ENCODE measurements at regions of chr4 and their contacts with region 1.

Region 1: DNA sequence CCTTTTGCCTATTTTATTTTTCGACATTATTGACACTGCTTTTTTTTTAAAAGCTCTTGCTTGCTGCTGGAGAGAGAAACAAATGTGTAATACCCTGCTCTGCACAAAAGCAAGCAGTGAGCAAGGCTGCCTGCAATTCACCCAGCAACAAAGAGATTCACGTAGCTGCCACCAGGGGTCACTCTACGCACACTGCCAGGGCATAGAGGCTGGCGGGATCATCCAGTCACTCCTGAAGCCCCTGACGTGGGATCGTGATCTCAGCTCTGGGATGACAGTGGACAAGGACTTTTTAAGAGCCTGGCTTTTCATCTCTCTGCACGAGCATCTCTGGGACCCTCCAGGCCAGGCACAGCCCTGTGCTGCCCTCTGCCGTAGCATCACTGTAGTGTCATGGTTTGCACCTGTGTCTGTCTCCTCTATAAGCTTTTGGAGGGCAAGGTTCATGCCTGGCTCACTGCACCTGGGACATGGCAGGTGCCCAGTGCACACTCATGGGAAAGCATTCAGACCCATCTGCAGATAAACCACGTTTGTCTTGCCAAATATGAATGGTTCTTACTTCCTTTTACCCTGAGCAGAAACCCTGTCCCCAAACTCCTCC is 19.8 kb downstream of the C4orf50 start:
- DNase-seq: peak; percentile 63
- H3K4me3 Mint-ChIP-seq: no peak overlapping the region
- H3K27ac Mint-ChIP-seq: no peak overlapping the region
- H3K4me1 Mint-ChIP-seq: peaks cover 4% of the 10 kb centered on the region
- H3K27me3 Mint-ChIP-seq: peaks cover 3% of the 10 kb centered on the region

Region 2: DNA sequence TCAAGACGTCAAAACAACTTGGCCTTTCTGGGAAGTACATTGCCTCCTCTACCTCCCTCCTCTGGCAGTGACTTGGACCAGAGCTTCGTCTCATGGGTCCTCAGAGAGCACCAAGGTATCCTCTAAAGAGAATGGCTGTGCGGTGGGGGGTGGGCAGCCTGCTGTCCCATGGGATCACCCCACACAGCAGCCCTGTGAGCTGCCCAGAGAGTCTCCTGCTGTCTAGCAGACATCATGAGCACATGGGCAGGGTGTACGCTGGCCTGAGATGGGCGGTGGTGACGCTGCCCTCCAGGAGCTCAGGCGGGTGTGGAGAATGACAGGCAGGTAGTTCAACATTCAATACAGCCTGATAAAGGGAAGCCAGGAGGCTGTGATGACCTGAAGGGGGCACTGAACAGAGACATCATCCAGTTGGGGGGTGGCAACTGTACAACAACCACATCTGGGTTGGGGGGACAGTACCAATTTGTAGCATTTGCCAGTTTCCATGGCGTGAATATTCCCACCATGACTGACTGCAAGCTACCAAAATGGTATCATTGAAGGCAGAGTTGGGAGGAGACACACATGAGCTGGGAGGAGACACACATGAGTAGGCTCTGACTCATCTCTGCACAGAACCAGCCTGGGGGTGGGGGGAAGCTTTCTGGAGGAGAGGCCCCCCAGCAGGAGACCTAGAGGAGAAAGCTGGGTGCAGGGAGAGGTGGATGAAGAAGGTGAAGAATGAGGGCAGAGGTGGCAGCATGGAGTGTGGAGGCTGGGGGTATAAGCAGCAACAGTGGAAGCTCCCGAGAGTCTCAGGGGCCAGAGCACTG is 16.1 kb before region 1 on chr4:
- CTCF ChIA-PET with region 1: interaction called, 13 read pairs
- POLR2A ChIA-PET with region 1: no interaction called
- intact Hi-C with region 1: no loop called
- DNase-seq: no peak
- H3K4me3 Mint-ChIP-seq: no peak overlapping the region
- H3K27ac Mint-ChIP-seq: no peak overlapping the region
- H3K4me1 Mint-ChIP-seq: no peaks in the 10 kb centered on the region
- H3K27me3 Mint-ChIP-seq: peaks cover 11% of the 10 kb centered on the region

Region 3: DNA sequence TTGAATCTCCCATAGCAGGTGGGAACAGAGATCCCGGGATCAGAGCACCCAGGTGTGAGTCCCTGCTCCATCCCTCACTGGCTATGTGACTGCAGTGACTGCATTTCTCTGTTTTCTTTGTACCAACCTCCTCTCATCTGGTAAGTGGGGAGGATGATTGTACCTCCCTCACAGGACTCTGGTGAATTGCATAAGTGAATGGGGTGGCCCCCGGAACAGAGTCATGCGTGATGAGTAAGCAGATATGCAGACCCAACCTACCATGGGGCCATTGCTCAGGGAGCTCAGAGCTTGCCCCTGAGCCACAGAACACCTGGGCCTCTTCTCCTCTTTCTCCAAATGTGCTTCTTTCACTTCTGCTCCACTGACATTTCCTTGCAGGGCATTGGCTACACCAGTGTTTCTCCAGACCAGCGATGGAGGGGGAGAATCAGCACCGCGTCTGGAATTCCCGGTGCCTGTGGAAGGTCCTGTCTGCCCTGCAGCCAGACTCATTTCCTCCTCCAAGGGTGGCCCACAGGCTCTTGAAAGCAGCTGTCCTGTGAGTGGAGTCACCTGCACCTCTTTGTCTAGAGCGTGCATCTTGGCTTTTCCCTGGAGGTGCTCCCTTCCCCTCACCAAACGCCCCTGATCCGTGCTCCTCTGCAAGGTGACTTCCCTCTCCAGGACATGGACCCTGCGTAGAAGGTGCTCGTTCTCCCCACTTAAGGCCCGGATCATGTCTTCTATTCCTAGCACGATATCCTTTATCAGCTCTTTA is 10.2 kb before region 1 on chr4:
- CTCF ChIA-PET with region 1: interaction called, 23 read pairs
- POLR2A ChIA-PET with region 1: no interaction called
- intact Hi-C with region 1: no loop called
- DNase-seq: no peak
- H3K4me3 Mint-ChIP-seq: no peak overlapping the region
- H3K27ac Mint-ChIP-seq: no peak overlapping the region
- H3K4me1 Mint-ChIP-seq: no peaks in the 10 kb centered on the region
- H3K27me3 Mint-ChIP-seq: peaks cover 2% of the 10 kb centered on the region

Region 4: DNA sequence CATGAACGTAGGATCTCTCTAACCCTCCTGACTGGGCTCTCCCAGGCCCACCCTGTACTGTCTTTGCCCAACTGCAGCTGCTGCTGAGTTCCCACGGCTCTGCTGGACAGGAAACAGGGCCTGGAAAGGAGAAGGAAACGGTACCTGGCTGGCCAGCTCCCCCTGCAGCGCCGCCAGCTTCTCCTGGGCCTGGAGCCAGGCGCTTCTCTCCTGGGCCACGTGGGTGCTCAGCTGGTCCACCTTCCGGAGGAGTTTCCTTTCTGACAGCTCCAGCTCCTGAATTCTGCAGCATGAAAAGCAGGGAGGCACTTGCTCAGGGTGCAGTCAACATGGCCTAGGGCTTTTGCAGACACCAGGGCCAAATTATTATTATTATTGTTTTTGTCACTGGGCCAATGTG is 13.3 kb after region 1 on chr4:
- CTCF ChIA-PET with region 1: interaction called, 21 read pairs
- POLR2A ChIA-PET with region 1: no interaction called
- intact Hi-C with region 1: no loop called
- DNase-seq: no peak
- H3K4me3 Mint-ChIP-seq: no peak overlapping the region
- H3K27ac Mint-ChIP-seq: no peak overlapping the region
- H3K4me1 Mint-ChIP-seq: no peaks in the 10 kb centered on the region
- H3K27me3 Mint-ChIP-seq: peaks cover 21% of the 10 kb centered on the region

Region 5: GRCh38 chr4:6019316-6020263 is 21.2 kb after region 1 on chr4:
- CTCF ChIA-PET with region 1: interaction called, 11 read pairs
- POLR2A ChIA-PET with region 1: no interaction called
- intact Hi-C with region 1: no loop called
- DNase-seq: peak; percentile 48
- H3K4me3 Mint-ChIP-seq: no peak overlapping the region
- H3K27ac Mint-ChIP-seq: no peak overlapping the region
- H3K4me1 Mint-ChIP-seq: no peaks in the 10 kb centered on the region
- H3K27me3 Mint-ChIP-seq: no peaks in the 10 kb centered on the region

Region 6: GRCh38 chr4:6079965-6080364 is 81.5 kb after region 1 on chr4:
- CTCF ChIA-PET with region 1: no interaction called
- POLR2A ChIA-PET with region 1: no interaction called
- intact Hi-C with region 1: no loop called
- DNase-seq: no peak
- H3K4me3 Mint-ChIP-seq: no peak overlapping the region
- H3K27ac Mint-ChIP-seq: no peak overlapping the region
- H3K4me1 Mint-ChIP-seq: no peaks in the 10 kb centered on the region
- H3K27me3 Mint-ChIP-seq: no peaks in the 10 kb centered on the region

Measured in activated CD4-positive, alpha-beta memory T cell treated with anti-CD3 and anti-CD28 coated beads for 36 hours (primary cell).